Right lobe of liver (tissue), 6 donors: ENCODE measurements at regions of chr16 and their contacts with region 1.

Region 1: DNA sequence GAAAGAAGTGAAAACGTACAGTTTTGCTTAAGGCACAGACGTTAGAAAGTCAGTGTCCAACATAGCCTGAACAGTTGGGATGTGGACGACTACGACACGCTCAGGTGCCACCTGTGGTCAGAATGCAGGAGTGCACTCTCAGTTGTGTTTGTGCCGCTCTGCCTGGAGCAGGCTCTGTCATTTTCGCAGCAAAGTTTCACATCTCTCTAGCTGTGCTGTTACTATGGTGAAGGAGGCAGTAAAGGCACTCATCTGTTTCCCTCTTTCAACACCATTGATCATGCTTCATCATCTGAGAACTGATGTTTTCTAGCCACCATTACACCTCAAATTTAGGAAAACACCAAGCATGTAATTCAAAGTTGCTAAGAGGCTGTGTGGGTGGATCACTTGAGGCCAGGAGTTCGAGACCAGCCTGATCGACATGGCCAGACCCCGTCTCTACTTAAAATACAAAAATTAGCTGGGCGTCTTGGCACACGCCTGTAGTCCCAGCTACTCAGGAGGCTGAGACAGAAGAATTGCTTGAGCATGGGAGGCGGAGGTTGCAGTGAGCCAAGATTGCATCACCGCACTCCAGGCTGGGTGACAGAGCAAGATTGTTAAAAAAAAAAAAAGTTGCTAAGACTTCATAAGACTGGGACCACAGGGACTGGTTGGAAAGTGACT is 44.9 kb upstream of the DNAJA2 start:
- DNase-seq: peak; percentile 61 to 73 (median 63)
- ATAC-seq: peak; percentile 99 to 100 (median 100)
- H3K4me3 ChIP-seq: no peak overlapping the region
- H3K27ac ChIP-seq: no peak overlapping the region
- H3K4me1 ChIP-seq: no peaks in the 10 kb centered on the region
- H3K27me3 ChIP-seq: no peaks in the 10 kb centered on the region
- CTCF ChIP-seq: peak; percentile 50 to 72 (median 68)
- POLR2A ChIP-seq: no peak

Region 2: GRCh38 chr16:46937536-46937935 is 80.8 kb before region 1 on chr16:
- intact Hi-C with region 1: no loop called
- DNase-seq: no peak
- ATAC-seq: no peak
- H3K4me3 ChIP-seq: no peak overlapping the region
- H3K27ac ChIP-seq: no peak overlapping the region
- H3K4me1 ChIP-seq: no peaks in the 10 kb centered on the region
- H3K27me3 ChIP-seq: no peaks in the 10 kb centered on the region
- CTCF ChIP-seq: no peak
- POLR2A ChIP-seq: no peak

Region 3: DNA sequence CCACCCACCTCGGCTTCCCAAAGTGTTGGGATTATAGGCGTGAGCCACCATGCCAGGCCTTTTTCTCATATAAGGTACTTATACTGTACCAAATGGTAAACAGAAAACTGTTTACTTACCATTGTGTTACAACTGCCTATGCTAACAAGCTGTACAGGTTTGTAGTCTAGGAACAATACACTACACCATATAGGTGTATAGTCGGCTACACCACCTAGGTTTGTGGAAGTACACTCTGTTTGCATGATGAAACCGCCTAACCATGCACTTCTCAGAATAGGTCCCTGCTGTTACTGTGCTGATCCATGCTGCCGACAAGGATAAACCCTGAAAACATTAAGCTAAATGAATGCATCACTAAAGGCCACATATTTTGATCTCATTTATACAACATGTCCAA is 63.8 kb before region 1 on chr16:
- intact Hi-C with region 1: loop called in 1 of 2 experiments (anchors 10 kb)
- DNase-seq: peak in 1 of 3 donors; percentile 4
- ATAC-seq: no peak
- H3K4me3 ChIP-seq: no peak overlapping the region
- H3K27ac ChIP-seq: no peak overlapping the region
- H3K4me1 ChIP-seq: peaks cover 0 to 8% (median 0%) of the 10 kb centered on the region in 4 donors
- H3K27me3 ChIP-seq: no peaks in the 10 kb centered on the region
- CTCF ChIP-seq: no peak
- POLR2A ChIP-seq: no peak

Region 4: GRCh38 chr16:47229053-47230050 is 211.0 kb after region 1 on chr16:
- intact Hi-C with region 1: no loop called
- DNase-seq: no peak
- ATAC-seq: no peak
- H3K4me3 ChIP-seq: no peak overlapping the region
- H3K27ac ChIP-seq: no peak overlapping the region
- H3K4me1 ChIP-seq: no peaks in the 10 kb centered on the region
- H3K27me3 ChIP-seq: no peaks in the 10 kb centered on the region
- CTCF ChIP-seq: no peak
- POLR2A ChIP-seq: no peak